HepG2 (cell line): ENCODE measurements at regions of chr15 and their contacts with region 1.

Region 1: DNA sequence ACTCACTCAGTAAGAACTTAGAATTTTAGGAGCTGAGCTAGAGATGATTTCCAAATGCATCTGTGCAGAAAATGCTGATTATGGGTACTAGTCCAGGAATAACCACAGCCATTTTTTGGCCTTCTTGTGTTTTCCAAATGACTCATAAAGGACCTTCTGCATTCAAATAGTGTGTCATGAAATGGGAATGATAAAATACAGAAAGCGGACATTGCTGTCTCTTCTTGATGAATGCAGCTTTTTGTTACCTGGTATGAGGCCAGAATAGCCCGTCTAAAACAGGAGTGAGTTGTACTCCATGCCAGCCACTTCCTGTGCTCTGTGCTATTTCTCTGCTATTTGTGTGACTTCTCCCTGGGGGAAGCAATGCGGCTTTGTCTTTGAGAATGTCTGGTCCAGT is 20.5 kb upstream of the FRMD5 start:
- DNase-seq: peak; percentile 74
- ATAC-seq: no peak
- H3K4me3 ChIP-seq: no peak overlapping the region
- H3K27ac ChIP-seq: no peak overlapping the region
- H3K4me1 ChIP-seq: no peaks in the 10 kb centered on the region
- H3K27me3 ChIP-seq: 0 out of 5 replicates have a peak, but pooled peaks cover 0 to 13% of the 10 kb centered on the region in 2 experiments
- CTCF ChIP-seq: no peak
- EP300 ChIP-seq: no peak
- POLR2A ChIP-seq: no peak
- RAD21 ChIP-seq: no peak

Region 2: GRCh38 chr15:43903864-43904290 is 311.7 kb before region 1 on chr15:
- CTCF ChIA-PET with region 1: interaction called, 5 read pairs
- POLR2A ChIA-PET with region 1: no interaction called
- in situ Hi-C with region 1: loop called (anchors 10 kb)
- intact Hi-C with region 1: loop called (anchors 2 kb)
- DNase-seq: peak; percentile 66
- ATAC-seq: peak; percentile 91
- H3K4me3 ChIP-seq: no peak overlapping the region
- H3K27ac ChIP-seq: no peak overlapping the region
- H3K4me1 ChIP-seq: peaks cover 23% of the 10 kb centered on the region
- H3K27me3 ChIP-seq: no peaks in the 10 kb centered on the region
- CTCF ChIP-seq: peak; percentile 91
- EP300 ChIP-seq: no peak
- POLR2A ChIP-seq: no peak
- RAD21 ChIP-seq: peak; percentile 80

Region 3: GRCh38 chr15:44092221-44092620 is 123.4 kb before region 1 on chr15:
- CTCF ChIA-PET with region 1: no interaction called
- POLR2A ChIA-PET with region 1: no interaction called
- in situ Hi-C with region 1: no loop called
- intact Hi-C with region 1: loop called (anchors 5 kb)
- DNase-seq: no peak
- ATAC-seq: no peak
- H3K4me3 ChIP-seq: no peak overlapping the region
- H3K27ac ChIP-seq: no peak overlapping the region
- H3K4me1 ChIP-seq: no peaks in the 10 kb centered on the region; the same call in 1 of the 2 replicates
- H3K27me3 ChIP-seq: no peaks in the 10 kb centered on the region
- CTCF ChIP-seq: no peak
- EP300 ChIP-seq: no peak
- POLR2A ChIP-seq: no peak
- RAD21 ChIP-seq: no peak

Region 4: DNA sequence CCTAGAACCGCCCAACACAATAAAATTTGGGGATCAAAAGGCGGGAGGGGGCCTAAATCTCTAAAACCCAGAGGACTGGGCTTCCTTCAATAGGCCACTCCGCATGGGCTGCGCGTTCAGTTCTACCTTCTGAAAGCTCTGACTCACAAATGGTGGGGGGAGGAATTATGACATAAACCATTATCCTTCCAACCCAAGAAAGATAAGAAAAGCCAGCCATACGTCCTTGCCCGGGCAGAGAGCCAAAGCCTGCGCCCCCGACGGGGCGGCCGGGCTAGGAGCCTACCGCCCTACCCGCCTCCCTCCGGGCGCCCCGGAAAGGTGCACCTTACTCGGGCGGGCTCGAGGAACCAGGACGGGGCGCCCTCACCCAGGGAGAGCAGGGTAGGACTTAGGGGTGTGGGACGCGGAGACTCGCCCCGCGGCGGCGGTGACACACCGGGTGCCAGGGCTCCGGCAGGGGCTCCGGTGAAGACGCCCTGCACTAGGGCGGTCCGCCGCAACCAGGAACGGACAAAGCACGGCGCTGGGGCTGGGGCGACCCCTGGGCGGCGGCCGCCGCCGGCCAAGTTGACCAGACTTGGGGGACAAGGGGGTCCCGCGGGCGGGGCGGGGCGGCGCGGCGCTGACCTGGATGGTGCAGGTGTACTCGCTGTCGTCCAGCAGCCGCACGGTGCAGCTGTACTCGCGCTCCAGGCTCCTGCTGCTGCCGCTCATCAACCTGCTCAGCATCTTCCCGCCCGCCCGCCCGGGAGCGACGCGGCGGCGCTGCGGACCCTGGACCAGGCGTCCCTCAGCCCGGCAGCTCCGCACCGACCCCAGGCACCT is 21.1 kb before region 1 on chr15:
- CTCF ChIA-PET with region 1: no interaction called
- POLR2A ChIA-PET with region 1: no interaction called
- in situ Hi-C with region 1: no loop called
- intact Hi-C with region 1: no loop called
- DNase-seq: no peak
- ATAC-seq: peak; percentile 74
- H3K4me3 ChIP-seq: peak overlapping the region in 2 of 3 experiments; percentile 63 to 72; a peak in 4 of 6 replicates
- H3K27ac ChIP-seq: no peak overlapping the region
- H3K4me1 ChIP-seq: peaks cover 31% of the 10 kb centered on the region
- H3K27me3 ChIP-seq: peaks cover 0 to 18% of the 10 kb centered on the region in 2 experiments; a peak in 2 of 5 replicates
- CTCF ChIP-seq: no peak
- EP300 ChIP-seq: no peak
- POLR2A ChIP-seq: no peak
- RAD21 ChIP-seq: no peak